Left ventricle myocardium superior (tissue), 1 donor: ENCODE measurements at regions of chr15 and their contacts with region 1.

Region 1: GRCh38 chr15:31080591-31081014 is 20.9 kb downstream of the TRPM1 start:
- DNase-seq: peak; percentile 76
- ATAC-seq: peak; percentile 93

Region 2: GRCh38 chr15:30962079-30962478 is 118.5 kb before region 1 on chr15:
- intact Hi-C with region 1: no loop called
- DNase-seq: peak; percentile 38
- ATAC-seq: peak; percentile 86

Region 3: GRCh38 chr15:31031471-31032067 is 49.0 kb before region 1 on chr15:
- intact Hi-C with region 1: loop called (anchors 10 kb)
- DNase-seq: no peak
- ATAC-seq: peak; percentile 40

Region 4: GRCh38 chr15:31285772-31286261 is 205.2 kb after region 1 on chr15:
- intact Hi-C with region 1: no loop called
- DNase-seq: no peak
- ATAC-seq: no peak